Activated T-helper 2 cell treated with anti-CD3 and anti-CD28 coated beads, Interferon-gamma antibody, Interleukin-2, Interleukin-4, amounts not matched to agents 10 μg/mL and 5 μg/mL and 100 μg/mL, durations not matched to agents 14 hours and 24 hours and 36 hours (primary cell): ENCODE measurements at regions of chr10 and their contacts with region 1.

Region 1: GRCh38 chr10:14560274-14560673 is 214.4 kb downstream of the FAM107B start:
- DNase-seq: peak; percentile 52
- H3K4me3 Mint-ChIP-seq: peak overlapping the region; percentile 38
- H3K27ac Mint-ChIP-seq: peak overlapping the region; percentile 84
- H3K4me1 Mint-ChIP-seq: peaks cover 83% of the 10 kb centered on the region
- H3K27me3 Mint-ChIP-seq: no peaks in the 10 kb centered on the region

Region 2: DNA sequence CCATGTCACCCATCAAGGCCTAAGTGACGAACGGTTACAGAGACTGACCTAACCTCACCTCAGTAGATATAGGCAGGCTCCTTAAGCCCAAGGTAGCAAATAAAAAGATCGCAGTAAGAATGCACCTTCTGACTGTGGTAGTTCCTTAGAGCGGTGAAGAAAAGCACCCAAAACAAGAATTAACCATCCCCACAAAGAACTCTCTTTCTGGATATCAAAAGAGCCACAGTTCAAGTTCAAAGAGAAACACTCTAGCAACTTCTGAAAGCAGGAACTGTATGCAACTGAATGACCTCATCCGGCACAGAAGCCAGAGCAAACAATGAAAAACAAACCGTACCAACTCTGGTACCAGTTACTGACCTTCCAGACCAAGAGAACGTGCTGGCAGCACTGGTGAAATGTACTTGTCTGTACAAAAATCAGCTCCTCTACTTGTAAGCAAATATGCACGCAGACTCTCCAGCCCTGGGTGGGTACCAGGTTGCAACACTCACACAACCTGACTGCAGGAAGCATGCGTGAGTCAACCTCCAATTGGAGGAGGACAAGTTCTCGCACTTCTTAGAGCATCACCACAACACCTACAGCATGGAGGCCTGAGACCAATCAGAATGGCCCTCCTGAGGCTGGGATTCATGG is 11.7 kb after region 1 on chr10:
- intact Hi-C with region 1: loop called (anchors 1 kb)
- DNase-seq: peak; percentile 55
- H3K4me3 Mint-ChIP-seq: peak overlapping the region; percentile 73
- H3K27ac Mint-ChIP-seq: peak overlapping the region; percentile 91
- H3K4me1 Mint-ChIP-seq: peaks cover 73% of the 10 kb centered on the region
- H3K27me3 Mint-ChIP-seq: no peaks in the 10 kb centered on the region

Region 3: DNA sequence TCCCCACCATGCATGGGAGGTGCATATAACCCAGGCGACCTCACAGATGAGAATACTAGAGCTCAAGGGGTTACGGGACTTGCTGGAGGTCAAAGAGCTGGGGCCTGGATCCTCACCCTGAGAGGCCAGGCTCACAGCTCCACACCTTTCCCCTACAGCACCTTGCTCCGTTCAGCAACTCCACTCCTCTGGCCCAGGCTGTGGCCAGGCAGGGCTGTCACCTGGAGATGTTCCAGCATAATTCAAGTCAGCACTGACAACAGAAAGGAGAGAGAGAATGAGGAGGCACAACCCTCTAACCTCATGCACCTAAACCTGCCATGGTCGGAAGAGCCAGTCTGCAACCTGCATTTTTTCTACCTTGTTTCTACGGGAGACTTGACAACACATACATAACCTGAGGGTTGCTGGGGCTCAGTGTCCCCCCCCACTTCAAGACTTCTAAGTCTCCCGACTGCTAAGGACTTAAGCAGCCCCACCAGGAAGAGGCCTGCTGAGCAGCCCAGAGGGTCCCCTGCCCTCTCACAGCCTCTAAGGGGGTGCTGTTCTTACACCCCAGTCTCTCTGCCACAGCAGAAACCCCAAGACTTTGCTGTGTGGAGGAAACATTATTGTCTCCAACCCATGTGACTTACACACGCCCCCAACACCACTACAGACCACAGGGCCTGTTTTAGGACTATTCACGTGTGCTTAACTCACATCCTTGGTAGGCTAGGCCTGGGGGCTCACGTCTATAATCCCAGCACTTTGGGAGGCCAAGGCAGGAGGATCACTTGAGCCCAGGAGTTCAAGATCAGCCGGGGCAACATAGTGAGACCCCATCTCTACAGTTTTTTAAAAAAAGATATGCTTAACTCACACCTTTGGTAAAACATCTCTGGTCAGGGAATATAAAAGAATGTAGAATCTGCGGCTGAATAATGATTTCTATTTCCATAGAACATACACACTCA is 38.8 kb after region 1 on chr10:
- intact Hi-C with region 1: no loop called
- DNase-seq: no peak
- H3K4me3 Mint-ChIP-seq: no peak overlapping the region
- H3K27ac Mint-ChIP-seq: peak overlapping the region; percentile 33
- H3K4me1 Mint-ChIP-seq: peaks cover 65% of the 10 kb centered on the region
- H3K27me3 Mint-ChIP-seq: no peaks in the 10 kb centered on the region